Sigmoid colon (tissue), 7 donors: ENCODE measurements at regions of chr5 and their contacts with region 1.

Region 1: DNA sequence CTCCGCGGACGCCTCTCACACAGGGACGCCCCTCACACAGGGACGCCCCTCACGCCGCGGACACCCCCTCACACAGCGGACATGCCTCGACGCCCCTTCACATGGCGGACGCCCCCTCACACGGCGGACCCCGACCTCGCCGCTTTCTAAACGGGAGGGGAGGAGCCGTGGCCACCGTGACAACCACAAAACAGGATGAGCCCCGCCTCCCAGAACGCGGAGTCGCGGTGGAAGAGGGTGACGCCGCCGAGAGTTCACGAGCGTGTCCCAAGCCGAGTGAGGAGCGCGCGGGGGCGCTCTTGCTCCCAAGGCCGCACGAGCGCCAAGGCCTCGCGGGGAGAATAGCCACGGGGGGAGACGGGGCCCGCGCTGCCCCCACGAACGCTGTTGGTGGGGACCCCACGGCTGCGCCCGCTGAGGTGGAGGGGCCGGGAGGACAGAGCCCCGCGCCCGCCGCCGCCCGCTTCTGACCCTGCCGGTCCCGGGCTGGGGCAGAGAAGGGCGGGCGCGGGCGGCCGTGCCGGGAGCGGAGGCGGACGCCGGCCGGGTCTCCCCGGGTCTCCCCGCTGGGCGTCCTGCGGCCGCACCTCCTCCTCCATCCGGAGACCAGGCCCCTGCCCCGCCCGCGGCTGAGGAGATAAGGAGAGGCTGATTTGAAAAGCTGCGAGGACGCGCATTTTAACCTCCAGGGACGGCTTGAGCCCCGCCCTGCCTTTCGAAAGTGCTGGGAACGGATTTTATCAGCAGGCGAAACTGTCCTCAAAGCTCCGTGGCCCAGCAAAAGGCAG is 3.9 kb upstream of the NKD2 start:
- DNase-seq: peak; percentile 92
- H3K4me3 ChIP-seq: peak overlapping the region; percentile 33 to 74 (median 60)
- H3K27ac ChIP-seq: peak overlapping the region; percentile 69 to 70 (median 69)
- H3K4me1 ChIP-seq: peaks cover 0 to 32% (median 30%) of the 10 kb centered on the region in 4 donors
- H3K27me3 ChIP-seq: peaks cover 8 to 16% (median 15%) of the 10 kb centered on the region in 3 donors
- CTCF ChIP-seq: peak in 1 of 4 experiments; percentile 21
- EP300 ChIP-seq: no peak
- POLR2A ChIP-seq: no peak

Region 2: GRCh38 chr5:923281-923873 is 81.3 kb before region 1 on chr5:
- intact Hi-C with region 1: loop called (anchors 2 kb)
- DNase-seq: peak; percentile 89
- H3K4me3 ChIP-seq: no peak overlapping the region
- H3K27ac ChIP-seq: no peak overlapping the region
- H3K4me1 ChIP-seq: peaks cover 0 to 14% (median 13%) of the 10 kb centered on the region in 4 donors
- H3K27me3 ChIP-seq: peaks cover 0 to 15% (median 11%) of the 10 kb centered on the region in 3 donors
- CTCF ChIP-seq: peak; percentile 68 to 93 (median 80)
- EP300 ChIP-seq: no peak
- POLR2A ChIP-seq: no peak

Region 3: GRCh38 chr5:1111727-1112289 is 107.2 kb after region 1 on chr5 and contains the start of gene SLC12A7:
- intact Hi-C with region 1: loop called (anchors 10 kb)
- DNase-seq: no peak
- H3K4me3 ChIP-seq: peak within 1 kb of the TSS; percentile 84 to 100 (median 94)
- H3K27ac ChIP-seq: peak within 1 kb of the TSS; percentile 81 to 86 (median 83)
- H3K4me1 ChIP-seq: peaks cover 0 to 29% (median 23%) of the 10 kb centered on the region in 4 donors
- H3K27me3 ChIP-seq: no peaks in the 10 kb centered on the region
- CTCF ChIP-seq: no peak
- EP300 ChIP-seq: no peak
- POLR2A ChIP-seq: no peak
- total RNA-seq, gene SLC12A7: 12.5 to 23.5 (median 18.4) TPM

Region 4: DNA sequence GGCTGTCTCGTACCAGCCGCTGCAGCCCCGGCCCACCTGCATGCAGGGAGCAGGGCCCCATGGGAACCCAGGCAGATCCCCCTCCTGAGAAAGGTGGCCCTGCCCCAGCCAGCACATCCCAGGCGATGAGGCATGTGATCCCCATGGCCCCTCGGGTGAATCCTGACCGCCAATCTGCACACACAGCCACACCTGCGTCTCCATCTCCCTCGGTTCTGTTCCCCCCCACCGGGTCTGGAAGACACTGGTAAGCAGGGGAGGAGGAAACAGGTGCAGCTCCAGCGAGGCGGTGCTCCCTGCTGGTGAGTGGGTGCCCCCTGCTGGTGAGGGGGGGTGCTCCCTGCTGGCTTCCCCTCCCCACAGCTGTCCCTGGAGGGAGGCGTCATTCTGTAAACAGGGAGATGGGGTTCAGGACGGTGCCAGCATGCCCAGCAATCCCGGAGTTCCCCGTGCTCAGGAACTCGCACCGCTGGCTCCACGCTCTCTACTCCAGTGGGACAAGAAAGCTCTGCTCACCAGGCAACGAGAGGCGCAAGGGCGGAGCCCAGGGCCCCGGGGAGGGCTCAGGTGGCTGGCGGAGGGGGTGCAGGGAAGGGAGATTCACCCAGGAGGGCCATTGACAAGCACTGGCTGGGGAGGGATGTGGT is 135.6 kb after region 1 on chr5:
- intact Hi-C with region 1: loop called (anchors 5 kb)
- DNase-seq: peak; percentile 88
- H3K4me3 ChIP-seq: no peak overlapping the region
- H3K27ac ChIP-seq: no peak overlapping the region
- H3K4me1 ChIP-seq: peaks cover 0 to 16% (median 8%) of the 10 kb centered on the region in 4 donors
- H3K27me3 ChIP-seq: no peaks in the 10 kb centered on the region
- CTCF ChIP-seq: peak; percentile 58 to 95 (median 82)
- EP300 ChIP-seq: no peak
- POLR2A ChIP-seq: no peak